ENCODE measurements at regions of chr1 and their contacts with region 1.

Region 1: GRCh38 chr1:201254625-201255506 is 28.4 kb upstream of the PKP1 start:
- DNase-seq: peak; percentile 75
- H3K4me3 ChIP-seq: no peak overlapping the region
- H3K27ac ChIP-seq: no peak overlapping the region
- H3K4me1 ChIP-seq: no peaks in the 10 kb centered on the region
- H3K27me3 ChIP-seq: no peaks in the 10 kb centered on the region
- CTCF ChIP-seq: peak; percentile 97

Region 2: DNA sequence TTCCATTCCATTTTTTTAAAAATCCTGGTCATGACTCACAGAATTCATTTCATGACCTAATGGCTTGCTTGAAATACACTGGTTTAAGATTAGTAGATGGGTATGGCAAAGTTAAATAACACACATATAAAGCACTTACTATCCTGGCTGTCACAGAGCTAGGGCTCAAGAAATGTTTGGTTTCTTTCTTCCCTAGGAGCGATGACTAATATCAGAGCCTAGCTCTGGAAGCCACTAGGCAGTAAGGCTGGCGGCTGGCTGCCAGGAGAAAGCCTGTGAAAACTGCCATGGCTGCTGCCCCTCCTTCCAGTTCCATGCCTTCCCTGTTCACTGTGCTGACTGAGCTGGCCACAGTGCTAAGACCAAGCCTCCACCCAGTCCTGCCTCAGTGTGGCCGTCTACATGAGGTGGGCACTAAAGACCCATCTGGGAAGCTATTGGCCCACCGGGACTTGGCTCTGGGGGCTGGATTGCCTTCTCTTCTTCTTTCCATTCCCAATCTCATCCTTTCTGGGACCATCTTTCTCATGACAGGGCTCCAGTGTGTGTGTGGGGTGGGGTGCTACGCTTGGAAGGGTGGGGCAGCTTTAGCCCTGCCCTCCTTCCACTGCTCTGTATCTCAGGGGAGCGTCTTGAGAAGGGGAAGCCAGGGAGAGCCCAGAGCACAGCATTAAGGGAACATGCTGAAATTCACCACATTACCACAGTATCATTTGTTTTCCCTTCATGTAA is 117.1 kb before region 1 on chr1:
- intact Hi-C with region 1: no loop called
- DNase-seq: peak; percentile 34
- H3K4me3 ChIP-seq: no peak overlapping the region
- H3K27ac ChIP-seq: no peak overlapping the region
- H3K4me1 ChIP-seq: no peaks in the 10 kb centered on the region
- H3K27me3 ChIP-seq: no peaks in the 10 kb centered on the region
- CTCF ChIP-seq: no peak

Region 3: GRCh38 chr1:201309426-201309825 is 54.6 kb after region 1 on chr1:
- intact Hi-C with region 1: no loop called
- DNase-seq: peak; percentile 84
- H3K4me3 ChIP-seq: no peak overlapping the region
- H3K27ac ChIP-seq: no peak overlapping the region
- H3K4me1 ChIP-seq: peaks cover 17% of the 10 kb centered on the region
- H3K27me3 ChIP-seq: no peaks in the 10 kb centered on the region
- CTCF ChIP-seq: no peak

Region 4: DNA sequence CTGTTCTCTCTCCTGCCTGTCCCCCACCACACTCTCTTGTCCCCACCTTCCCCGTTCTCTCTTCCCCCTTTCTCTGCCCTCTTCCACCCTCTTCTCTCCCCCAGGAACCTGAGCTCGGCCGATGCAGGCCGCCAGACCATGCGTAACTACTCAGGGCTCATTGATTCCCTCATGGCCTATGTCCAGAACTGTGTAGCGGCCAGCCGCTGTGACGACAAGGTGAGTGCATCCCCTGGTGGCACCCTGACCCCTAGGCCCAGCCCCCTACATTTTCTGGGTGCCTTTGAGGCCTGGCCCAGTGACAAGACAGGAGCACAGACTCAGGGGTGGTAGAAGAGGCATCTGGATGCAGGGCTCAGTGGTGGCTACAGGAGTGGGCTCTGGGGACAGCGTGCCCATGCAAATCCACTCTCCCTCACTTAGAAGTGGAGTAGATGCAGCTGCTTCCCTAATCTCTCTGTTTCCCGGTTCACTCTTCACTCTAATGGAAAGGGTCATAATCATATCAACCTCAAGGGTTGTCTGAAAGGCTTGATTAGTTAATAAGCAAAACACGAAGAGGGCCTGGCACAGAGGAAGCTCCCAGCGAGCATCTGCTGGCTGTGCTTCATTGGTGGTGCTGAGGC is 65.4 kb after region 1 on chr1:
- intact Hi-C with region 1: no loop called
- DNase-seq: no peak
- H3K4me3 ChIP-seq: no peak overlapping the region
- H3K27ac ChIP-seq: no peak overlapping the region
- H3K4me1 ChIP-seq: no peaks in the 10 kb centered on the region
- H3K27me3 ChIP-seq: no peaks in the 10 kb centered on the region
- CTCF ChIP-seq: no peak

Region 5: GRCh38 chr1:201361652-201362504 is 107.0 kb after region 1 on chr1:
- intact Hi-C with region 1: loop called (anchors 1 kb)
- DNase-seq: peak; percentile 38
- H3K4me3 ChIP-seq: no peak overlapping the region
- H3K27ac ChIP-seq: no peak overlapping the region
- H3K4me1 ChIP-seq: no peaks in the 10 kb centered on the region
- H3K27me3 ChIP-seq: no peaks in the 10 kb centered on the region
- CTCF ChIP-seq: peak; percentile 84